ENCODE measurements at regions of chr19 and their contacts with region 1.

Region 1: DNA sequence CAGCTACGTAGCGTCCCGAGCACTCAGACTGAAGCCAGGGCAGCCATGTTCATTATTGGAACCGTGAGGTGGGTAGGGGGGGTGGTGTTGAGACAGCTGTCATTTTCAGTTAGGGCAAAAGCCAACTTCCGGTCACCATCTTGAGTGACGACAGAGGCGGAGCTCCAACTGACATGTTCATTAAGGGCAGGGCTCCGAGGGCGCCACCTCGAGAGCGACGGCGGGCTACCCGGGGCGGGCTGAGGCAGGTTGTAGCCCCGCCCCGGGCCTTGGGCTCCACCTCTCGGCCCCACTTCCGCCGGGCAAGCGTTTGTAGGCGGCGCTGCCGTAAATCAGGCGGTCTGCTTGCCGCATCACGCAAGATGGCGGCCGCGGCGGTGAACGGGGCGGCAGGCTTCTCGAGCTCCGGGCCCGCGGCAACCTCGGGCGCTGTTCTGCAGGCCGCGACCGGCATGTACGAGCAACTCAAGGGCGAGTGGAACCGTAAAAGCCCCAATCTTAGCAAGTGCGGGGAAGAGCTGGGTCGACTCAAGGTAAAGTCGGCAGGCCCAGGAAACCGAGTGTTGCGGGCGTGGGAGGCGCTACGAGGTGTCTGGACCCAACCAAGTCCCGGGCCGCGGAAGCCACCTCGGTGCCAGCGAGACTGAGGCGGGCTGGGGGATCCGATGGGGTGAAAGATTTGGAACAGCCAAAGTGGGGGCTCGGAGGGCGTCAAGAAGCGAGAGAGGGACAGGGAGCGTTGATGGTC is at the start of gene PSMD8:
- DNase-seq: peak; percentile 95 to 100 (median 98)
- ATAC-seq: peak; percentile 96
- H3K4me3 ChIP-seq: peak within 1 kb of the TSS; percentile 93
- H3K4me3 Mint-ChIP-seq: peak within 1 kb of the TSS; percentile 99
- H3K27ac ChIP-seq: peak within 1 kb of the TSS; percentile 77 to 89
- H3K27ac Mint-ChIP-seq: peak within 1 kb of the TSS; percentile 89
- H3K4me1 ChIP-seq: peaks cover 34% of the 10 kb centered on the region
- H3K4me1 Mint-ChIP-seq: peaks cover 30% of the 10 kb centered on the region
- H3K27me3 ChIP-seq: no peaks in the 10 kb centered on the region
- H3K27me3 Mint-ChIP-seq: peaks cover 6% of the 10 kb centered on the region
- CTCF ChIP-seq: peak; percentile 19
- total RNA-seq, gene PSMD8: 61.2 to 64.4 TPM

Region 2: GRCh38 chr19:37172368-37173366 is 1201.9 kb before region 1 on chr19 and contains the start of gene ZNF585A:
- CTCF ChIA-PET with region 1: no interaction called
- POLR2A ChIA-PET with region 1: no interaction called
- intact Hi-C with region 1: loop called in 1 of 2 experiments (anchors 5 kb)
- DNase-seq: peak; percentile 83 to 98 (median 89)
- ATAC-seq: peak; percentile 99
- H3K4me3 ChIP-seq: peak within 1 kb of the TSS; percentile 77
- H3K4me3 Mint-ChIP-seq: no peak within 1 kb of the TSS
- H3K27ac ChIP-seq: peak within 1 kb of the TSS; percentile 63 to 73
- H3K27ac Mint-ChIP-seq: no peak within 1 kb of the TSS
- H3K4me1 ChIP-seq: peaks cover 11% of the 10 kb centered on the region
- H3K4me1 Mint-ChIP-seq: no peaks in the 10 kb centered on the region
- H3K27me3 ChIP-seq: no peaks in the 10 kb centered on the region
- H3K27me3 Mint-ChIP-seq: no peaks in the 10 kb centered on the region
- CTCF ChIP-seq: no peak
- total RNA-seq, gene ZNF585A: 4.5 to 4.6 TPM

Region 3: DNA sequence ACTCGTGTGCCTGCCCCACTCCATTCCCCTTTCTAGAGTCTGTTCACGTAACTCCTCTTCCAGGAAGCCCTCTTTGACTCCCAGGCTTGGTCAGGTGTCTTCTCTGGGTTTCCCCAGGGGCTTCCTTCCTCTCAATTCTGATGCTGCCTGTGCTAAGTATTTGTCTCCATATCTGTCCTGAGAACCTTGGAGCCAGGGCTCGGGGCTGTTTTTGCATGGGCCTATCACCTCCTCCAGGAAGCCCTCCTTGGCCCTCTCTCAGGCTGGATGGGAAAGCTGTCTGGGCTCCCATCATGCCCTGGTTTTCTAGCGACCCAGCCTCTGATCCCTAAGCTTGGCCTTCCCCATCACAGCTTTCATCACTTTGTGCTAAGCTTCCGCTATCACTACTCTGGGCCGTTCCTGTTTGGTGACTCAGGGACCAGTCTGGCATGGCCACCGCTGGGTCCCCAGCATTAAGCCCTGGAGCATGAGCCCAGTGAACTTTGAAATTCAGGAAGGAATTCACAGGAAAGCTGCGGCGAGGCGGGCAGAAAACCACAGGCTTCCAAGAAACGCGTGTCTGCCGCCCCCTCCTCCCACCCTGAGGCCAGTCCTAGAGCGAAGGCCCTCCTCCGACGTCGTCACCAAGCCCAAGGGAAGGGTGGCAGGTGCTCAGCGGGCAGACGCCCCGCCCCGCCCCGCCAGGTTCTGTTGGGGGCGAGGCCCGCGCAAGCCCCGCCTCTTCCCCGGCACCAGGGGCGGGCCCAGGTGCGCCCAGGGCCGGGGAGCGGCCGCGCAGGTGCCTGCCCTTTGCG is 110.7 kb before region 1 on chr19:
- CTCF ChIA-PET with region 1: no interaction called
- POLR2A ChIA-PET with region 1: interaction called, 16 read pairs
- intact Hi-C with region 1: no loop called
- DNase-seq: peak in 13 of 14 experiments; percentile 63 to 92 (median 74)
- ATAC-seq: peak; percentile 92
- H3K4me3 ChIP-seq: peak overlapping the region; percentile 68
- H3K4me3 Mint-ChIP-seq: peak overlapping the region; percentile 83
- H3K27ac ChIP-seq: peak overlapping the region; percentile 23 to 29
- H3K27ac Mint-ChIP-seq: peak overlapping the region; percentile 52
- H3K4me1 ChIP-seq: peaks cover 24% of the 10 kb centered on the region
- H3K4me1 Mint-ChIP-seq: peaks cover 31% of the 10 kb centered on the region
- H3K27me3 ChIP-seq: no peaks in the 10 kb centered on the region
- H3K27me3 Mint-ChIP-seq: peaks cover 5% of the 10 kb centered on the region
- CTCF ChIP-seq: no peak

Region 4: GRCh38 chr19:38335949-38336637 is 38.5 kb before region 1 on chr19:
- CTCF ChIA-PET with region 1: interaction called, 21 read pairs
- POLR2A ChIA-PET with region 1: interaction called, 66 read pairs
- intact Hi-C with region 1: loop called (anchors 1 kb)
- DNase-seq: peak; percentile 85 to 97 (median 92)
- ATAC-seq: peak; percentile 63
- H3K4me3 ChIP-seq: peak overlapping the region; percentile 95
- H3K4me3 Mint-ChIP-seq: peak overlapping the region; percentile 93
- H3K27ac ChIP-seq: peak overlapping the region; percentile 84 to 97
- H3K27ac Mint-ChIP-seq: peak overlapping the region; percentile 96
- H3K4me1 ChIP-seq: peaks cover 27% of the 10 kb centered on the region
- H3K4me1 Mint-ChIP-seq: peaks cover 24% of the 10 kb centered on the region
- H3K27me3 ChIP-seq: no peaks in the 10 kb centered on the region
- H3K27me3 Mint-ChIP-seq: no peaks in the 10 kb centered on the region
- CTCF ChIP-seq: no peak

Region 5: GRCh38 chr19:38387550-38388348 is 13.1 kb after region 1 on chr19 and contains the start of gene GGN:
- CTCF ChIA-PET with region 1: interaction called, 11 read pairs
- POLR2A ChIA-PET with region 1: interaction called, 45 read pairs
- intact Hi-C with region 1: loop called in 1 of 2 experiments (anchors 2 kb)
- DNase-seq: peak; percentile 59 to 91 (median 75)
- ATAC-seq: peak; percentile 74
- H3K4me3 ChIP-seq: peak within 1 kb of the TSS; percentile 58
- H3K4me3 Mint-ChIP-seq: peak within 1 kb of the TSS; percentile 94
- H3K27ac ChIP-seq: no peak within 1 kb of the TSS
- H3K27ac Mint-ChIP-seq: peak within 1 kb of the TSS; percentile 70
- H3K4me1 ChIP-seq: peaks cover 44% of the 10 kb centered on the region
- H3K4me1 Mint-ChIP-seq: peaks cover 29% of the 10 kb centered on the region
- H3K27me3 ChIP-seq: peaks cover 17 to 18% of the 10 kb centered on the region in 2 experiments
- H3K27me3 Mint-ChIP-seq: peaks cover 39% of the 10 kb centered on the region
- CTCF ChIP-seq: no peak
- total RNA-seq, gene GGN: 0.17 to 0.19 TPM

Region 6: GRCh38 chr19:38618590-38619360 is 244.2 kb after region 1 on chr19 and contains the start of gene EIF3K:
- CTCF ChIA-PET with region 1: no interaction called
- POLR2A ChIA-PET with region 1: interaction called, 10 read pairs
- intact Hi-C with region 1: no loop called
- DNase-seq: peak; percentile 92 to 100 (median 96)
- ATAC-seq: peak; percentile 63
- H3K4me3 ChIP-seq: peak within 1 kb of the TSS; percentile 97
- H3K4me3 Mint-ChIP-seq: peak within 1 kb of the TSS; percentile 97
- H3K27ac ChIP-seq: peak within 1 kb of the TSS; percentile 84 to 94
- H3K27ac Mint-ChIP-seq: peak within 1 kb of the TSS; percentile 94
- H3K4me1 ChIP-seq: peaks cover 62% of the 10 kb centered on the region
- H3K4me1 Mint-ChIP-seq: peaks cover 59% of the 10 kb centered on the region
- H3K27me3 ChIP-seq: no peaks in the 10 kb centered on the region
- H3K27me3 Mint-ChIP-seq: no peaks in the 10 kb centered on the region
- CTCF ChIP-seq: no peak
- total RNA-seq, gene EIF3K: 309 to 322 TPM